BJ (cell line): ENCODE measurements at regions of chr4 and their contacts with region 1.

Region 1: GRCh38 chr4:88211473-88212252 is 53.2 kb upstream of the ABCG2 start:
- DNase-seq: no peak
- H3K4me3 ChIP-seq: no peak overlapping the region
- H3K27me3 ChIP-seq: peaks cover 4% of the 10 kb centered on the region
- CTCF ChIP-seq: peak; percentile 56

Region 2: GRCh38 chr4:87856816-87857215 is 354.8 kb before region 1 on chr4:
- CTCF ChIA-PET with region 1: interaction called, 45 read pairs
- POLR2A ChIA-PET with region 1: no interaction called
- DNase-seq: no peak
- H3K4me3 ChIP-seq: no peak overlapping the region
- H3K27me3 ChIP-seq: no peaks in the 10 kb centered on the region
- CTCF ChIP-seq: no peak

Region 3: GRCh38 chr4:87985097-87985886 is 226.4 kb before region 1 on chr4:
- CTCF ChIA-PET with region 1: interaction called, 12 read pairs
- POLR2A ChIA-PET with region 1: no interaction called
- DNase-seq: no peak
- H3K4me3 ChIP-seq: no peak overlapping the region
- H3K27me3 ChIP-seq: no peaks in the 10 kb centered on the region
- CTCF ChIP-seq: peak; percentile 71

Region 4: GRCh38 chr4:88054901-88055300 is 156.8 kb before region 1 on chr4:
- CTCF ChIA-PET with region 1: interaction called, 13 read pairs
- POLR2A ChIA-PET with region 1: no interaction called
- DNase-seq: no peak
- H3K4me3 ChIP-seq: no peak overlapping the region
- H3K27me3 ChIP-seq: no peaks in the 10 kb centered on the region
- CTCF ChIP-seq: peak; percentile 53

Region 5: DNA sequence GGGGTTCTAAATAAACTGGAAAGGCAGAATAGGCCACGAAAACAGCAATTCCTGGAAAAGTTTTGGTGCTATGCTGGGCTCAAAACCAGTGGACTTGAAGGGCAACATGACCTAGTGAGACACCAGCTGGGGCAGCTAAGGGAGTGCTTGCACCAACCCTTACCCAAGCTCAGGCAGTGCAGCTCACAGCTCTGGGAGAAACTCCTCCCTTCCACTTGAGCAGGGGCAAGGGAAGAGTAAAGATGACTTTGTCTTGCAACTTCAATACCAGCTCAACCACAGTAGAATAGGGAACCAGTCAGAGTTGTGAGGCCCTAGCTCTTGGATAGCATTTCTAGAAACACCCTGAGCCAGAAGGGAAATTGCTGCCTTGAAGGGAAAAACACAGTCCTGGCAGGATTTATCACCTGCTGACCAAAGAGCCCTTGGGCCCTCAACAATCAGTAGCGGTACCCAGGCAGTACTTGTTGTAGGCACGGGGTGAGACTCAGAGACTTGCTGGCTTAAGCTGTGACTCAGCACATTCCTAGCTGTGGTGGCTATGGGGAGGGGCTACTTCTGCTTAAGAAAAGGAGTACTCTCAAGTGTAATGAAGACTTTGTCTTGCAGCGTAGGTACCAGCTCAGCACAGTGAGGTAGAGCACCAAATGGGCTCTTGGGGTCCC is 33.6 kb before region 1 on chr4:
- CTCF ChIA-PET with region 1: no interaction called
- POLR2A ChIA-PET with region 1: no interaction called
- DNase-seq: peak; percentile 30
- H3K4me3 ChIP-seq: no peak overlapping the region
- H3K27me3 ChIP-seq: no peaks in the 10 kb centered on the region
- CTCF ChIP-seq: no peak

Region 6: GRCh38 chr4:88244816-88245579 is 33.3 kb after region 1 on chr4:
- CTCF ChIA-PET with region 1: no interaction called
- POLR2A ChIA-PET with region 1: no interaction called
- DNase-seq: no peak
- H3K4me3 ChIP-seq: no peak overlapping the region
- H3K27me3 ChIP-seq: no peaks in the 10 kb centered on the region
- CTCF ChIP-seq: no peak

Region 7: GRCh38 chr4:88514557-88515511 is 303.2 kb after region 1 on chr4:
- CTCF ChIA-PET with region 1: interaction called, 125 read pairs
- POLR2A ChIA-PET with region 1: no interaction called
- DNase-seq: no peak
- H3K4me3 ChIP-seq: no peak overlapping the region
- H3K27me3 ChIP-seq: no peaks in the 10 kb centered on the region
- CTCF ChIP-seq: no peak

Region 8: GRCh38 chr4:89434364-89434988 is 1222.8 kb after region 1 on chr4:
- CTCF ChIA-PET with region 1: no interaction called
- POLR2A ChIA-PET with region 1: no interaction called
- DNase-seq: no peak
- H3K4me3 ChIP-seq: no peak overlapping the region
- H3K27me3 ChIP-seq: peaks cover 2% of the 10 kb centered on the region
- CTCF ChIP-seq: peak; percentile 77